ENCODE measurements at regions of chr6 and their contacts with region 1.

Region 1: DNA sequence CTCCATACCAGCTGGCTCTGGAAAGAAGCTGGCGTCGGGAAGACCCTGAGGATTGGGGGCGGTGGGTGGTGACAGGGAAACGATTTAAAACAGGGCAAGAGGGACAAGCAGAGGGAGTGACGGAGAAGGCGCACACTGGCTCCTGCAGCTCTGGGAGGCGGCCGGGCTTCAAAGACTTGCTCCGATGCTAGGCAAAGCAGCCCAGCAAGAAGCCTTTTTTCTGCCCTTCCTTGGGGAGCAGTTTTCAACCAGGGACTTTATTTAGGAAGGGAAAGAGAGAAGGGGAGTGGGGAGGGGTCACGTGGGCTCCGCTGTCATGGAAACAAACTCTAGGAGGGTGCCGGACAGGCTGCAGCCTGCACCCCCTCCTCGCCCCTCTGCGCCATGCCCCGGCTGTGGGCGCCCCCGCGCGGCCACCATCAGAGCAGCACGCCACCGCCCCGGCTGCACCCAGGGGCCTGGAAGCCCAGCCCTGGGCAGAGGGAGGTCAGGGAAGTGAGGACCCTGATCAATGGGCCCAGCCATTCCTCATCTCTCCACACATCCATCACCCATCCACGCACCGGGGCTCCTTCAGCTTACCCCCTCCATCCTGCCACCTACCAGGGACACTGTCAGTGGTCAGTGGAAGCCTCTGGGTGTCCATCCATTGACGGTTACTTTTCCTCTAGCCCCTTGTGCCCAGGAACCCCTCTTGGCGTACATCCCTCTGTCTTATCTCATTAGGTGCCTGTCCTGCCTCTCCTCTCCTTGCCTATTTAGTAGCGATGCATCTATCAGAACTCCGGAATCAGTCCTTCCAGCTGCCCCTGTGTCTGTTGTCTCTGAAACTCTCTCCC is 66.6 kb upstream of the CCDC167 start:
- DNase-seq: peak; percentile 86
- ATAC-seq: peak; percentile 78
- H3K4me3 Mint-ChIP-seq: peak overlapping the region; percentile 76
- H3K27ac Mint-ChIP-seq: no peak overlapping the region
- H3K4me1 Mint-ChIP-seq: peaks cover 15% of the 10 kb centered on the region
- H3K27me3 Mint-ChIP-seq: 0 out of 2 replicates have a peak, but pooled peaks cover 5% of the 10 kb centered on the region
- CTCF ChIP-seq: peak; percentile 83

Region 2: DNA sequence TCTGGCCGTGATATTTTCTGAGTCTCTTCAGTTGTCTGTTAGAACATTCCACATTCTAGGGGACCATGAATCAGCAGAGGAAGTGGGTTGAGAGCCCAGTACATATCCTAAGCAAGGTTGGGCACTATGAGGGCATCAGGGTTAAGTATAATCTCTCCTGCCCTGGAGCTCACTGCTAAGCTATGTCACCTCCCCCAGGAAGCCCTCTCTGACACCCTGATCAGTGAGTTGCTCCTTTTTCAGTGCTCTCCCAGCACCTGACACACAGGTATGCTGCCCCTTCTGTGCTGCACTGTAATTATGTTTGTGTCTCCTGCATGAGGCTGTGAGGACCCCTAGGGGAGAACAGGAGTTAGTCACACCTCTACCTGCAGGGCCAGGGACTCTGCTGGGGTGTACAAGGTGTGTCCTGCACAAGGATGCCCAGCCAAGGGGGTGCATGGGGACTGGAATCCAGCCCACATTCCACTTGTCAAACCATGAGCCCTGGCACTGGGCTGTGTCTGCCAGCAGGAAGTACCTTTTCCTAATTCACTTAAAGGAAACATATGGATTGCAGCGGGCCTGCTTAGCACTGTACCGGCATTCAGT is 864.8 kb before region 1 on chr6:
- CTCF ChIA-PET with region 1: no interaction called
- POLR2A ChIA-PET with region 1: no interaction called
- DNase-seq: no peak
- ATAC-seq: peak; percentile 87
- H3K4me3 Mint-ChIP-seq: no peak overlapping the region
- H3K27ac Mint-ChIP-seq: no peak overlapping the region
- H3K4me1 Mint-ChIP-seq: no peaks in the 10 kb centered on the region
- H3K27me3 Mint-ChIP-seq: no peaks in the 10 kb centered on the region
- CTCF ChIP-seq: no peak

Region 3: GRCh38 chr6:37489660-37490361 is 76.5 kb before region 1 on chr6:
- CTCF ChIA-PET with region 1: interaction called, 34 read pairs
- POLR2A ChIA-PET with region 1: no interaction called
- DNase-seq: no peak
- ATAC-seq: peak; percentile 16
- H3K4me3 Mint-ChIP-seq: no peak overlapping the region
- H3K27ac Mint-ChIP-seq: no peak overlapping the region; the same call in 1 of the 2 replicates
- H3K4me1 Mint-ChIP-seq: peaks cover 45% of the 10 kb centered on the region
- H3K27me3 Mint-ChIP-seq: no peaks in the 10 kb centered on the region
- CTCF ChIP-seq: no peak

Region 4: GRCh38 chr6:37531026-37531425 is 35.3 kb before region 1 on chr6:
- CTCF ChIA-PET with region 1: interaction called, 140 read pairs
- POLR2A ChIA-PET with region 1: interaction called, 8 read pairs
- DNase-seq: no peak
- ATAC-seq: no peak
- H3K4me3 Mint-ChIP-seq: no peak overlapping the region
- H3K27ac Mint-ChIP-seq: no peak overlapping the region
- H3K4me1 Mint-ChIP-seq: peaks cover 16% of the 10 kb centered on the region
- H3K27me3 Mint-ChIP-seq: peaks cover 35% of the 10 kb centered on the region
- CTCF ChIP-seq: no peak

Region 5: DNA sequence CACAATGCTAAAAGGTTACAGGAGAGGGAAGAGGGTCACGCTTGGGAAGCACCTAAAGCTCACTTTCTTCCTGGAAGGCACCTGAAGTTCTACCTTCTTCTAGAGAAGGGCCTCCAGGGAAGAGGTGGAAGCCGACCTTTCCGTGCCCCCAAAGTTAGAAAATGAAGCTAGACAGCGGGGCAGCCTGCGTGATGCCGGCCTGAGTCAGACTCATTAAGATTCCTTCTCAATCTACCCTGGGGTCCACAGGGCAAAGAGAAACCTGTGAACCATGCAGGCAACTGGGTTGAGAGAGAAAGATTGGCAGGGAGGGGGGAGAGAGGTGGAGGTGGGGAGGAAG is 11.9 kb before region 1 on chr6:
- CTCF ChIA-PET with region 1: interaction called, 25 read pairs
- POLR2A ChIA-PET with region 1: no interaction called
- DNase-seq: no peak
- ATAC-seq: no peak
- H3K4me3 Mint-ChIP-seq: no peak overlapping the region
- H3K27ac Mint-ChIP-seq: no peak overlapping the region
- H3K4me1 Mint-ChIP-seq: peaks cover 8% of the 10 kb centered on the region
- H3K27me3 Mint-ChIP-seq: peaks cover 6% of the 10 kb centered on the region
- CTCF ChIP-seq: no peak

Region 6: GRCh38 chr6:37648465-37649330 is 82.4 kb after region 1 on chr6:
- CTCF ChIA-PET with region 1: interaction called, 13 read pairs
- POLR2A ChIA-PET with region 1: interaction called, 3 read pairs
- DNase-seq: peak; percentile 99
- ATAC-seq: peak; percentile 89
- H3K4me3 Mint-ChIP-seq: peak overlapping the region; percentile 58
- H3K27ac Mint-ChIP-seq: no peak overlapping the region
- H3K4me1 Mint-ChIP-seq: peaks cover 18% of the 10 kb centered on the region
- H3K27me3 Mint-ChIP-seq: peaks cover 72% of the 10 kb centered on the region
- CTCF ChIP-seq: no peak